ENCODE measurements at regions of chr22 and their contacts with region 1.

Region 1: GRCh38 chr22:19178656-19179496 is at the start of gene SLC25A1:
- DNase-seq: peak; percentile 95 to 97
- ATAC-seq: peak; percentile 93
- H3K4me3 ChIP-seq: peak within 1 kb of the TSS; percentile 49 to 77
- H3K27ac ChIP-seq: peak within 1 kb of the TSS; percentile 43 to 63
- H3K4me1 ChIP-seq: no peaks in the 10 kb centered on the region
- H3K27me3 ChIP-seq: no peaks in the 10 kb centered on the region
- total RNA-seq, gene SLC25A1: 45.8 to 51.6 TPM

Region 2: GRCh38 chr22:19143967-19144400 is 34.9 kb before region 1 on chr22:
- intact Hi-C with region 1: loop called in 1 of 2 experiments (anchors 2 kb)
- DNase-seq: no peak
- ATAC-seq: no peak
- H3K4me3 ChIP-seq: peak overlapping the region; percentile 44 to 69
- H3K27ac ChIP-seq: peak overlapping the region in 1 of 2 donors; percentile 58
- H3K4me1 ChIP-seq: no peaks in the 10 kb centered on the region
- H3K27me3 ChIP-seq: no peaks in the 10 kb centered on the region

Region 3: DNA sequence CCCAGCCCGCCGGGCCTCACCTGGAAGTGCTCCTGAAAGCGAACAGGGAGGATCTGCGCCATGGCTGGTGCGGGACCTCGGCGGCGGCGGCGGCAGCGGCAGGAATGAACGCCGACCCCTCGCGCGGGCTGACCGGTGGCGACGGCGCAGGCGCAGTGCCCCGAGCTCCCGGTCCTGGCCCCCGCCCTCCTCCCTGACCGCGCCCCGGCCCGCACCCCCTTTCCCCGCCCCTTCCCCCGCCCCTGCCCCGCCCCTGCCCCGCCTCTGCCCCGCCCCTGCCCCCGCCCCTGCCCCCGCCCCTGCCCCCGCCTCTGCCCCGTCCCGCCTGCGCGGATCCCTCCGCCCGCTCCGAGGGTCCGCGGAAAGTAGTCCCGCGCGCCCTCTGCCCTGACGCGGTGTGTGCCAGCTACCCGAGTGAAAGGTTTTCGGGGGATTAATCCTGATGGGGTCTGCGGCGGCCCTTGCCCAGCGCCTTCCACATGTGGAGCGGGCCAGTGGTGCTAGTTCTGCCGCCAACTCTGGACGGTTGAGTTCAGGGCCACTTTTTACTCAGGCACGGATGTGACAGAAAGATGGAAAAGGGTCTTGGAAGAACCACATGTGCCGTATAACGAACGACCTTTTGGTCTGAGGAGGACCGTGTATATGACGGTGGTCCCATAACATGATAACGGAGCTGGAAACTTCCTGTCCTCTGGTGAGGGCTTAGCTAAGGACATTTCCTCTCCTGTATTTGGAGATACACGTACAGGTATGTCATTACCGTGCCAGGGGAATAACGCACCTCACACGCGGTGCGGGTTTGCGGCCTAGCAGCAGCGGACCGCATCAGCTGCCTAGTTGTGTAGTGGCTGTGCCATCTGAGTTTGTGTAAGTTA is 112.9 kb after region 1 on chr22 and contains the start of gene CLTCL1:
- intact Hi-C with region 1: loop called in 1 of 2 experiments (anchors 2 kb)
- DNase-seq: peak; percentile 85 to 94
- ATAC-seq: peak; percentile 89
- H3K4me3 ChIP-seq: peak within 1 kb of the TSS; percentile 80 to 97
- H3K27ac ChIP-seq: peak within 1 kb of the TSS in 1 of 2 donors; percentile 23
- H3K4me1 ChIP-seq: no peaks in the 10 kb centered on the region
- H3K27me3 ChIP-seq: no peaks in the 10 kb centered on the region
- total RNA-seq, gene CLTCL1: 7.9 to 8.1 TPM

Region 4: DNA sequence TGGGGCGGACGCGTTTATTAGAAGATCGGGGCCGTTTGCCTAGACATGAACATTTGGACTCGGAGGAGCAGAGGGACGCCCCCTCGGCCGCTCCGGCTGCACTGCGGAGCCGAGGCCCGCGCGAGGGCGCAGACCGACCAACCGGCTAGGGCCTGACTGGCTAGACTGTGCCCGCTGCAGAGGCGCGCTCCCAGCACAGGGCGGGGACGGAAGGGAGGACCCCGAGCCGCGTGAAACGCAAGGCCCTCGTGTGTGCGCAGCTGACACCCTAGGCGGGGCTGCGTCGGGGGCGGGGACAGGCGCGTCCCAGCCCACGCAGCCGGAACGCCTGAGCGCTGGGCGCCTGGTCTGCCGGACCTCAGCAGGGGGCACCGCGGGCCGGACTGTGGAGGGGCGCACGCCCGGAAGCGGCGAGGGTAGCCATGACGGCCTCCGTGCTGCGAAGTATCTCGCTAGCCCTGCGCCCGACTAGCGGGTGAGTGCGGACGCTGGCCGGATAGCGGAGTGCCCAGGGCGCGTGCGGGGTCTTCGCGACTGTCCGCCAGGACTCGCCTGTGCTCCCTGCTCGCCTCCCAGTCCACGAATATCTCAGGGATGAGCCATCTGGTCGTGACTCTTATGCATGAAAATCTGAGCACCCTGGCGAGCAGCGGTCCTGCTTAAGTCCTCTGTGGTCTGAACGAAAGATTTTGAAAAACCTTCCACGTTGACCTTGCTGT is 253.4 kb after region 1 on chr22 and contains the start of gene MRPL40:
- intact Hi-C with region 1: loop called (anchors 2 to 5 kb)
- DNase-seq: peak; percentile 97
- ATAC-seq: peak; percentile 99
- H3K4me3 ChIP-seq: peak within 1 kb of the TSS; percentile 98
- H3K27ac ChIP-seq: peak within 1 kb of the TSS; percentile 30 to 89
- H3K4me1 ChIP-seq: no peaks in the 10 kb centered on the region
- H3K27me3 ChIP-seq: no peaks in the 10 kb centered on the region
- total RNA-seq, gene MRPL40: 13.9 to 16.4 TPM

Region 5: GRCh38 chr22:19454156-19454555 is 275.3 kb after region 1 on chr22:
- intact Hi-C with region 1: loop called in 1 of 2 experiments (anchors 5 kb)
- DNase-seq: no peak
- ATAC-seq: no peak
- H3K4me3 ChIP-seq: no peak overlapping the region
- H3K27ac ChIP-seq: no peak overlapping the region
- H3K4me1 ChIP-seq: no peaks in the 10 kb centered on the region
- H3K27me3 ChIP-seq: no peaks in the 10 kb centered on the region

Region 6: DNA sequence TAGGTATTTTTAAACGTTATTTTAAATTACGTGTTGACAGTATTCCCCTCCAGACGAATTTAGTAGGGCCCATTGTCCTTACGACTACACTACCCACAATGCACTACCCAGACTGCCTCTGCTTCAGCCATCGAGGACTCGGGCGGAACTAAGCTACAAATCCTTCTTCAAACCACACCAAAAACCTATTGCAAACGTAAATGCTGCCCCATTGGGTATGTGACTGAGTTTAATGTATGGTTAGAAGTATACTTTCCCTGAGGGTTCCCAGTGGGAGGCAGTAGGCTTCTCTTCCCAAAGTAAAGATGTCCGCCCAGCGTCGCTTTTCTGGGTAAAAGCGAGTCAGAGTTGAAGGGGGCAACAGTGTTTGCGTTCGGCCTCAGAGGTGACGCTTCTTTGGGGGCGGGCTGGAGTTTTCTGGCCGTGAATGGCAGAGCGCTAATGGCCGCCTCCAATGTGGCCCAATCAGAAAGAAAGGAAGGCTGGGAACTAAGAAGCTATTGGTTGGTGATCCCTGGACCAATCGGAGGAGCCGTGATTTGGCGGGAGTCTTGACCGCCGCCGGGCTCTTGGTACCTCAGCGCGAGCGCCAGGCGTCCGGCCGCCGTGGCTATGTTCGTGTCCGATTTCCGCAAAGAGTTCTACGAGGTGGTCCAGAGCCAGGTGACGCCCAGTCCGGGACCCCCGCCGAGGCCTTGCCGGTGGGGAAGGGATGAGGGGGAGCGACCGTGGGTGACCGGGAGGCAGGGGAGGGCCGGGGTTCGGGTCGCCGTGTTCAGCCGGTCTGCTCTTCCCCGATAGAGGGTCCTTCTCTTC is 300.7 kb after region 1 on chr22 and contains the start of gene CDC45:
- intact Hi-C with region 1: loop called in 1 of 2 experiments (anchors 2 kb)
- DNase-seq: peak; percentile 97 to 98
- ATAC-seq: peak; percentile 98
- H3K4me3 ChIP-seq: peak within 1 kb of the TSS; percentile 47 to 71
- H3K27ac ChIP-seq: peak within 1 kb of the TSS; percentile 91 to 99
- H3K4me1 ChIP-seq: no peaks in the 10 kb centered on the region
- H3K27me3 ChIP-seq: no peaks in the 10 kb centered on the region
- total RNA-seq, gene CDC45: 0.68 to 1.0 TPM

Region 7: GRCh38 chr22:20130739-20131596 is 952.1 kb after region 1 on chr22:
- intact Hi-C with region 1: loop called in 1 of 2 experiments (anchors 5 kb)
- DNase-seq: peak; percentile 92 to 95
- ATAC-seq: peak; percentile 90
- H3K4me3 ChIP-seq: peak overlapping the region; percentile 75 to 93
- H3K27ac ChIP-seq: peak overlapping the region; percentile 80 to 90
- H3K4me1 ChIP-seq: no peaks in the 10 kb centered on the region
- H3K27me3 ChIP-seq: no peaks in the 10 kb centered on the region

Measured in aorta (tissue), 5 donors.